PC-3 (cell line): ENCODE measurements at regions of chr22 and their contacts with region 1.

Region 1: GRCh38 chr22:38696606-38697424 is 3.9 kb downstream of the JOSD1 start:
- DNase-seq: peak; percentile 77
- ATAC-seq: peak; percentile 54
- H3K4me3 ChIP-seq: peak overlapping the region; percentile 85
- H3K27ac ChIP-seq: peak overlapping the region; percentile 88
- H3K4me1 ChIP-seq: peaks cover 33% of the 10 kb centered on the region
- H3K27me3 ChIP-seq: no peaks in the 10 kb centered on the region
- CTCF ChIP-seq: no peak

Region 2: GRCh38 chr22:38481162-38481870 is 215.5 kb before region 1 on chr22:
- CTCF ChIA-PET with region 1: no interaction called
- POLR2A ChIA-PET with region 1: no interaction called
- intact Hi-C with region 1: no loop called
- DNase-seq: no peak
- ATAC-seq: no peak
- H3K4me3 ChIP-seq: no peak overlapping the region
- H3K27ac ChIP-seq: no peak overlapping the region
- H3K4me1 ChIP-seq: no peaks in the 10 kb centered on the region
- H3K27me3 ChIP-seq: no peaks in the 10 kb centered on the region
- CTCF ChIP-seq: no peak

Region 3: GRCh38 chr22:38681784-38682335 is 15.0 kb before region 1 on chr22 and contains the start of gene TOMM22:
- CTCF ChIA-PET with region 1: no interaction called
- POLR2A ChIA-PET with region 1: interaction called, 4 read pairs
- intact Hi-C with region 1: loop called (anchors 2 kb)
- DNase-seq: peak; percentile 82
- ATAC-seq: peak; percentile 98
- H3K4me3 ChIP-seq: peak within 1 kb of the TSS; percentile 99
- H3K27ac ChIP-seq: 0 out of 2 replicates have a peak within 1 kb of the TSS, but pooled peaks have one; percentile 12
- H3K4me1 ChIP-seq: no peaks in the 10 kb centered on the region
- H3K27me3 ChIP-seq: no peaks in the 10 kb centered on the region
- CTCF ChIP-seq: peak; percentile 77
- total RNA-seq, gene TOMM22: 68.7 and 82.3 TPM in 2 replicates

Region 4: DNA sequence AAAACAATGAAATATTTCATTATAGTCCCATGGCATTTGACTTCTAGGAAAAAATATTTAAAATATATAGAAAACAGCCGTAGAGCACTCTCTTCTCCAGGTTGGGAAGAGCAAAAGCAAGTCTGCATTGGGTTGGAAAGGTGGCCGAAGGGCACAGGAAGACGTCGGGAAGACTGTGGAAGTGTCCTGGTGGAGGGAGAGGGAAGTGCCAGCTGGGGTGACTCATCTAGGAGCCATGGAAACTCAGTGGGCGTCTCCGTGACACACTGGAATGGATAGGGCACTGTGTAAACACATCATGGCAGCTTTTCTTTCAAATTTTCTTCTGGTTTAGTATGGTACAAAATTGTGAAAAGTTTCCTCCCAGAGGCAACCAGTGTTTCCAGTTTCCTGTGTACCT is 21.6 kb after region 1 on chr22:
- CTCF ChIA-PET with region 1: interaction called, 11 read pairs
- POLR2A ChIA-PET with region 1: interaction called, 3 read pairs
- intact Hi-C with region 1: no loop called
- DNase-seq: peak; percentile 85
- ATAC-seq: peak; percentile 100
- H3K4me3 ChIP-seq: no peak overlapping the region
- H3K27ac ChIP-seq: peak overlapping the region; percentile 45
- H3K4me1 ChIP-seq: peaks cover 22% of the 10 kb centered on the region
- H3K27me3 ChIP-seq: no peaks in the 10 kb centered on the region
- CTCF ChIP-seq: peak; percentile 48

Region 5: DNA sequence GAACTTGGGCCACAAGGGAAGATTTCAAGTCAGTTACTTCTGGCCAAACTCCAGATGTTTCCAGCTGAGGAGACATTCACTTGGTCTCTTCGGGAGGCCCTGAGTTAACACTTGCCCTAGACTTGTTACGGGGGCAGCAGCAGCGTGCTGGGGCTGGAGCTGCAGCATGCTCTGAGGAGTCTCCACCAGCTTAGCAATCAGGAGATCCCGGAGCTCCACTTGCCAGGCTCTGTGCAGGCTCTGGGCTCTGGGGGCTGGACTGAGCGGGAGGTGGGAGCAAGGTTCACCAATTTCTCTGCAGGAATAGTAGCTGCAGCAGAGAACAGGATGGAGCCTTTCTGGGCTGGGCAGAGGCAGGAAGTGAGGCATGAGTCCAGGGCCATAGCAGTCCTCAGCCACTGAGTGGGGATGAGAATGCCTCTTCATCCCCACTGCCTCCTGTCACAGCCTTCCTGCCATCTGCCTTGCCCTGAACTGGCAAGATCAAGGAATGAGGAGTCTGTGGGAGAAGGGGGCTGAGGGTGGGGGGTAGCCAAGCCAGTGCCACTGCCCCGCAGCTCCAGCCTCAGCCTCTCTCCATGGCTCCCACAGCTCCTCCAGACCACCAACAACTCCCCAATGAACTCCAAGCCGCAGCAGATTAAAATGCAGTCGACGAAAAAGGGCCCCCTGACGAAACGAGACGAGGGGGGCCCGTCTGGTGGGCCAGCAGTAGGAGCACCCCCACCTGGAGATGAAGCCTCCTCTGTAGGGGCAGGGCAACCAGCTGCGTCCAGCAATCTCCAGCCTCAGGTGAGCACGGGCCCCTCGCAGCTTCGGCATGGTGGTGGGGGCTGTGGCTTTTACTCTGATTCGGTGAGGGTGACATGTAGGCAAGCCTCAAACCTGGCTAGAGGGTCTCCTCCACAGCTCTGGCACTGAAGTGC is 32.3 kb after region 1 on chr22:
- CTCF ChIA-PET with region 1: no interaction called
- POLR2A ChIA-PET with region 1: no interaction called
- intact Hi-C with region 1: no loop called
- DNase-seq: no peak
- ATAC-seq: peak; percentile 18; the same call in 1 of the 2 replicates
- H3K4me3 ChIP-seq: no peak overlapping the region
- H3K27ac ChIP-seq: no peak overlapping the region
- H3K4me1 ChIP-seq: no peaks in the 10 kb centered on the region
- H3K27me3 ChIP-seq: no peaks in the 10 kb centered on the region
- CTCF ChIP-seq: no peak

Region 6: GRCh38 chr22:38755911-38756532 is 59.2 kb after region 1 on chr22 and contains the start of gene SUN2:
- CTCF ChIA-PET with region 1: no interaction called
- POLR2A ChIA-PET with region 1: no interaction called
- intact Hi-C with region 1: no loop called
- DNase-seq: peak; percentile 69
- ATAC-seq: peak; percentile 87
- H3K4me3 ChIP-seq: peak within 1 kb of the TSS; percentile 82
- H3K27ac ChIP-seq: peak within 1 kb of the TSS; percentile 75
- H3K4me1 ChIP-seq: peaks cover 23% of the 10 kb centered on the region
- H3K27me3 ChIP-seq: no peaks in the 10 kb centered on the region
- CTCF ChIP-seq: no peak
- total RNA-seq, gene SUN2: 54.0 and 55.5 TPM in 2 replicates

Region 7: DNA sequence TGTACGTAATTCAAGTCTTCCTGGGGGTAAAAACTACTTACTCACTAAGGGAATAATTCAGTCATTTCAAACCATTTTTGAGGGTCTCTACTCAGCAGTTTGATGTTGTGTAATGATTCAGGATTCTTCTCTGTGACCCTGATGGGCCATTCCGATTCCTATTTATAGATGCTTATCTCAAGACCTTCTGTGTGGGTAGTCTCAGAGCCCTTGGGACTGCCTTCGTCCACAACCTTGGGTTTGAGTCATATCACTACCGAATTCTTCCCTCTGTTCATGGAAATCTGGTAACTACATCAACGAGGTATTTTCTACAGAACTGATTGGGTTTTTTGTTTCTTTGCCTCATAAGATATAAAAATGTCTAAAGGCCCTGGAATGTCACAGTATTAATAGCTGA is 189.5 kb after region 1 on chr22:
- CTCF ChIA-PET with region 1: no interaction called
- POLR2A ChIA-PET with region 1: no interaction called
- intact Hi-C with region 1: no loop called
- DNase-seq: no peak
- ATAC-seq: no peak
- H3K4me3 ChIP-seq: no peak overlapping the region
- H3K27ac ChIP-seq: no peak overlapping the region
- H3K4me1 ChIP-seq: no peaks in the 10 kb centered on the region
- H3K27me3 ChIP-seq: no peaks in the 10 kb centered on the region
- CTCF ChIP-seq: no peak